AG04449 (cell line): ENCODE measurements at regions of chr3 and their contacts with region 1.

Region 1: DNA sequence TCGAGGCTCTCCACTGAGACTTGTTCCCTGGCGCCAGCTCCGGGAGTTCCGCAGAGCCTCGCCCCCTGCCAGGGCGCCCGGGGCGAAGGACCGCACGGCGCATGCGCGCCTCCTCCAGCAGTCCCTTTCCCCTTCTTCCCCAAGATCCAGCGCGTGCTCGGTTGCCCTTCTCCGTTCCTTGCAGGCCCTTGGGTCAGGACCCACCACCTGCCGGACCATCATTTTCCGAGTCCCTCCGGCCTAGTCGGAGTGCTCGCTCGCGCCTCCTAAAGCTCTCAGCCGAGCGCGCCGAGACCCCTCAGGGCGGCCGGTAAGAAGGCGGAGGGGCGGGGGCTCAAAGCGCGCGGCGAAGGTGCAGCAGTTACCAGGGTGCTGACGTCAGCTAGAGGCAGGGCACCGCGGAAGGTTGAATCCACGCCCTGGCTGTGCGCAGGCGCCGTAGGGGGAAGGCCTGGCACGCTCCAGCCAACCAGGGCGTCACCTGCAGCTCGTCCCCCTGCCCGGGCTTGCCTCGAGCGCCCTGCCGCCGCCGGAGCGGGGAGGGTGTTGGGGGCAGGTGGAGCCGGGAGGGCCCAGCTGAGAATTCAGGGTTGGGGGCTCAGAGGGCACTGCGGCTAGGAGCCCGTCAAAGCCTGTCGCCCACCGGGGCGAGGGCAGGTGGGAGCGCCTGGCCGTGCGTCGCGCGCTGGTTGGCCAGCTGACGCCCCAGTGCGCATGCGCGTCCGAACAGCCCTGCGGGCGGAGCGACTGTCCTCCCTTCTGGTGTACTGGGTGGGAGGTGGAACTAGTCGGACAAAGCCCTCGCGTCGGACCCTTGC is at the start of gene TCAIM:
- DNase-seq: peak; percentile 66
- H3K4me3 ChIP-seq: peak within 1 kb of the TSS; percentile 69
- CTCF ChIP-seq: no peak

Region 2: DNA sequence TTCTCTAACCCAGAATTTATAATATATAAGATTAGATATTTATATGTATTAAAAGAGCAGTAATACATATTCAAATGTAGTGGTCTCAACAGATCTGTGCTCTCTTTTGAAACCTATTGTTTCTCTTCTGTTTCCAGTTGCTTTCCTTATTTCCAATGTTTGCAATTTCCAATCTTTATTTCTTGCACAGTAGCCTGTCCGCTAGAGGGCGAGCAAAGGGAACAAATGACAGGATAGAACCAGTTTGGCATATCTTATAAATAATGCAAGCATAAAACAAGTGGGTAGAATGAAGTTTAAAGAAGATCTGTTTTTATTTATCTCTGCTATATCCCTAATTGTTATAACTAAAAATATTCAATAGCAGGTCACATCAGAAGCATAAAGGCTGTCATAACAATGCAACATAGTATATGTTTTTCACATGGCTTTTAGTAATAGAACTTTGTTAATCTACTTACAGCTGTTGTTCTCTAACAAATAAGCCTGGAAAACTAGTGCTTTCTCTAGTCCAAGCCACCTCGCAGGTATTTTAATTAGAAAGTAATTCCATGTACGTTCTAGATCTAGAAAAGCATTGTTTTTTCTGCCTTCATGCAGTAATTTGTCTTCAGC is 14.8 kb before region 1 on chr3:
- CTCF ChIA-PET with region 1: interaction called, 35 read pairs
- POLR2A ChIA-PET with region 1: no interaction called
- DNase-seq: no peak
- H3K4me3 ChIP-seq: no peak overlapping the region
- CTCF ChIP-seq: peak; percentile 65